AG04449 (cell line): ENCODE measurements at regions of chr1 and their contacts with region 1.

Region 1: GRCh38 chr1:92831762-92832536 is at the start of gene RPL5:
- DNase-seq: peak; percentile 73
- H3K4me3 ChIP-seq: peak within 1 kb of the TSS; percentile 98
- CTCF ChIP-seq: peak; percentile 98

Region 2: DNA sequence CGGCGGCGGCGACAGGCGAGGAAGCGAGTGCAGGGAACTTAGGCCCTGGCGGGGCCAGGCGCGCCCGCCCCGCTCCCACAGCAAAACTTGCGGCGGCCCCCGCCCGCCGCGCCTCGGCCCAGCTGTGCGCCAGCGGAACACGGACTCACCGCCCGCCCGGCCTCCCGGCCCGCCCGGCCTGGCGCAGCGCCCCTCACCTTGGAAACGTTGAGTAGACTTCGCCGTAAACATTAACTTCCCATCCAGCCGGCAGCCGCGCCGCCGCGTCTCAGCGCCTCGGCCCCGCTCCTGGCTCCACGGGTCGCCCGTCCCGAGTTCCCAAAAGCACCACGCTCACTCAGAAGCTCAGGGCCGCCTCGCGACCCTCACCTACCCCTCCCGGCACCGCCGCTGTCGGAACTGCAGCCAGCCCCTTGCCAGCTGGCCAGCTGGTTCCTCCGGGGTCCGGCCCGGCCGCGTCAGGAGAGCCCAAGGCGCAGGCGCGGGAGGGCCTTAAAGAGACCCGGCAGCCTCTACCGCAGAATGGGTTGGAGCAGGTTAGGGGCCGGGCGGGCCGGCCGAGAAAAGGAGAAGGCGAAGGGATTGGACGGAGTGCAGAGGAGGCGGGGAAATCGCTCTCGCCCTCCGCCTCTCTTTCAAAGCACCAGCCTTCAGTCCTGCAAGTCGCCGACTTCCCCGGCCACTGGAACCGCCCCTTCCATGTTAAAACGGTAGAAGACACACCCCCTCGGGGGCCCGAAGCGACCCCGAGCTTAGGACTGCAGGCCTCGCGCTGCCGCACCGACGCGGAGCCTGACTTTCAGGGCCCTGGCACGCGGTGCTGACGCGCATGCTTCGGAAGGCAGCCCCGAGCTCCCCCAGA is 47.1 kb before region 1 on chr1 and contains the start of gene EVI5:
- CTCF ChIA-PET with region 1: interaction called, 7 read pairs
- POLR2A ChIA-PET with region 1: interaction called, 13 read pairs
- DNase-seq: peak; percentile 78
- H3K4me3 ChIP-seq: peak within 1 kb of the TSS; percentile 86
- CTCF ChIP-seq: peak; percentile 10

Region 3: GRCh38 chr1:92843429-92844352 is 11.7 kb after region 1 on chr1:
- CTCF ChIA-PET with region 1: interaction called, 22 read pairs
- POLR2A ChIA-PET with region 1: interaction called, 13 read pairs
- DNase-seq: no peak
- H3K4me3 ChIP-seq: no peak overlapping the region
- CTCF ChIP-seq: no peak